Naive thymus-derived CD4-positive, alpha-beta T cell (primary cell): ENCODE measurements at regions of chr19 and their contacts with region 1.

Region 1: GRCh38 chr19:42301656-42302203 is at the start of gene PRR19:
- DNase-seq: peak in 1 of 9 donors; percentile 21
- ATAC-seq: peak; percentile 8
- H3K4me3 ChIP-seq: peak within 1 kb of the TSS; percentile 85
- H3K4me3 Mint-ChIP-seq: peak within 1 kb of the TSS; percentile 83 to 92 (median 89)
- H3K27ac ChIP-seq: peak within 1 kb of the TSS; percentile 71
- H3K27ac Mint-ChIP-seq: peak within 1 kb of the TSS; percentile 64 to 94 (median 88)
- H3K4me1 ChIP-seq: peaks cover 11 to 16% of the 10 kb centered on the region in 2 donors
- H3K4me1 Mint-ChIP-seq: peaks cover 11 to 30% (median 23%) of the 10 kb centered on the region in 7 donors
- H3K27me3 ChIP-seq: no peaks in the 10 kb centered on the region
- H3K27me3 Mint-ChIP-seq: no peaks in the 10 kb centered on the region
- total RNA-seq, gene PRR19: 0.32 to 0.68 (median 0.38) TPM in 4 of 5 experiments, not detected in the other

Region 2: GRCh38 chr19:42176990-42177685 is 124.6 kb before region 1 on chr19:
- CTCF ChIA-PET with region 1: no interaction called
- POLR2A ChIA-PET with region 1: interaction called, 7 read pairs
- intact Hi-C with region 1: loop called in 1 of 2 experiments (anchors 2 kb)
- DNase-seq: peak; percentile 52 to 82 (median 67)
- ATAC-seq: peak; percentile 96
- H3K4me3 ChIP-seq: peak overlapping the region; percentile 41
- H3K4me3 Mint-ChIP-seq: peak overlapping the region in 1 of 10 donors; percentile 12
- H3K27ac ChIP-seq: no peak overlapping the region
- H3K27ac Mint-ChIP-seq: no peak overlapping the region
- H3K4me1 ChIP-seq: peaks cover 12 to 21% of the 10 kb centered on the region in 2 donors
- H3K4me1 Mint-ChIP-seq: peaks cover 16 to 24% (median 19%) of the 10 kb centered on the region in 7 donors
- H3K27me3 ChIP-seq: peaks cover 0 to 11% of the 10 kb centered on the region in 2 donors
- H3K27me3 Mint-ChIP-seq: peaks cover 13 to 34% (median 19%) of the 10 kb centered on the region in 5 donors

Region 3: GRCh38 chr19:42229855-42230351 is 71.8 kb before region 1 on chr19:
- CTCF ChIA-PET with region 1: no interaction called
- POLR2A ChIA-PET with region 1: no interaction called
- intact Hi-C with region 1: no loop called
- DNase-seq: no peak
- ATAC-seq: no peak
- H3K4me3 ChIP-seq: no peak overlapping the region
- H3K4me3 Mint-ChIP-seq: no peak overlapping the region
- H3K27ac ChIP-seq: no peak overlapping the region
- H3K27ac Mint-ChIP-seq: peak overlapping the region in 7 of 9 donors; percentile 9 to 72 (median 50)
- H3K4me1 ChIP-seq: no peaks in the 10 kb centered on the region
- H3K4me1 Mint-ChIP-seq: peaks cover 17 to 38% (median 21%) of the 10 kb centered on the region in 7 donors
- H3K27me3 ChIP-seq: no peaks in the 10 kb centered on the region
- H3K27me3 Mint-ChIP-seq: no peaks in the 10 kb centered on the region

Region 4: DNA sequence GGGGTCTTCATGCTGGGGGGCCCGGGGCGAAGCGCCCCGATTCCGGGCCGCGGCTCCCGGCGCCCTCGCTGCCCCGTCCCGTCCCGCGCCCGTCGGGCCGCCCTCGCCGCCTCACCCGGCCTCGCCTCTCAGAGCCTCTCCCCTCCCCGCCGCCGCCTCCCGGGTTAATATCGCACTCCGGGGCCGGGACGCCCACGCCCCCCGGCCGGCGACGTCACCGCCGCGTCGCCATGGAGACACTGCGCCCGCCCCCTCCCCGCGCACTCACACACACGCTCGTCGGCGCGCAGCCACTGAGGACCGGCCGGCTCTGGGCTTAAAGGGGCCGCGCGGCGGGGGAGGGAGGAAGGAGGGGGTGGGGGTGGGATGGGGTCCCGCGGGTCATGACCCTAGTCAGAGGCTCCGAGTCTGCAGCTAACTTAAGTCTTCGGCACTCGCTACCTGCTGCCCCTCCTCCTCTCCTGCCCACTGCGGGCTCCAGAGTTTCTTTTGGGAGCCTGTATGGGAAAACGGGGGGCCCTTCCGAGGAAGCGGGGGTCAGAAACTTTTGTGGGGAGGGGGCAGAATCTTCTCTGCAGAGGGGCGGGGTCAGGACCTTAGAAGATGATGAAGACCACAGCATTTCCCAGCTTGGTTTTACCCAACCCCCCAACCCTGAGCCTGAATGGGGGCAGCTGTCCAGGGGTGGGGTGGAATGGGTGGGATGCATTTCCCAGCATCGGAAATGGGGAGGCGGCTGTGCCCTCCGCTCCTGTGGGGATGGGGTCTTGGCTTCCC is 46.6 kb before region 1 on chr19 and contains the start of gene ERF:
- CTCF ChIA-PET with region 1: no interaction called
- POLR2A ChIA-PET with region 1: no interaction called
- intact Hi-C with region 1: loop called (anchors 1 to 2 kb)
- DNase-seq: peak; percentile 90 to 98 (median 94)
- ATAC-seq: peak; percentile 90
- H3K4me3 ChIP-seq: peak within 1 kb of the TSS; percentile 96
- H3K4me3 Mint-ChIP-seq: peak within 1 kb of the TSS; percentile 42 to 99 (median 77)
- H3K27ac ChIP-seq: peak within 1 kb of the TSS; percentile 99
- H3K27ac Mint-ChIP-seq: peak within 1 kb of the TSS in 8 of 9 donors; percentile 43 to 92 (median 82)
- H3K4me1 ChIP-seq: peaks cover 20 to 29% of the 10 kb centered on the region in 2 donors
- H3K4me1 Mint-ChIP-seq: peaks cover 20 to 37% (median 30%) of the 10 kb centered on the region in 7 donors
- H3K27me3 ChIP-seq: no peaks in the 10 kb centered on the region
- H3K27me3 Mint-ChIP-seq: peaks cover 0 to 10% (median 0%) of the 10 kb centered on the region in 5 donors
- total RNA-seq, gene ERF: 42.5 to 105 (median 51.8) TPM

Region 5: DNA sequence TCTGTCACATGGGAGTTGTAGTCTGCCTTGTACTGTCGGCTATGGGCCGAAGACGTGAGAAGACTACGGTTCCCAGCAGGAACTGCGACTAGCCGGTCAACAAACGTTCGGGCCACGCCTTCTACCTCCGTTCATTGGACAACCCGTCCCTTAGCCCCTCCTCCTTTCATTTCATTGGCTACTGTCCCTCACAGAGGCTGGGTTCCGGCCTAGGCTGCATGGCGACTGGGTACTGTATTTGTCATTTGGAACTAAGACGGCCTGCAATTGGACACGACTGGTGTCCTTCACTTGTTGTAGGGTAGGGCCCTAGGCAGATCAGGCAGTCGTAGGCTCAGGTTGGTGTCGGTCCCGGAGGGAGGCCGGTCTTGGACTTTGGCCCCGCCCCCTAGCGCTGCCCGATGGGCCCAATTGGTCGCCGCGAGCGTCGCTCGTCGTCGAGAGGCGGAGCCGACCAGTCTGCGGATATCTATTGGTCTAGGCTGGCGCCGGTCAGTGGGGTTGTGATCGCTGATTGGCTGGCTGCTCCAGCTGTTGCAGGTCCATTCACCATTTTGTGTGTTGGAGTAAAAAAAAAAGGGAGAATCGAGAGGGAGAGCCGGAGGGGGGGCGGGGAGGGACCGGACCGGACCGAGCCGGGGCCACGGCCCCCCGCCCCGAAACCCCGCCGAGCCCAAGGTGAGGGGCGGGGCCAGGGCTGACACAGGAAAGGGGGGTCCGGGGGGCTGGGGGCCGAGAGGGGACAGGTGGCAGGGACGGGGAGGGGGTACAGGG is 32.8 kb before region 1 on chr19 and contains the start of gene CIC:
- CTCF ChIA-PET with region 1: no interaction called
- POLR2A ChIA-PET with region 1: no interaction called
- intact Hi-C with region 1: loop called (anchors 1 kb)
- DNase-seq: peak; percentile 95 to 100 (median 99)
- ATAC-seq: peak; percentile 82
- H3K4me3 ChIP-seq: peak within 1 kb of the TSS; percentile 85
- H3K4me3 Mint-ChIP-seq: peak within 1 kb of the TSS in 1 of 10 donors; percentile 94
- H3K27ac ChIP-seq: peak within 1 kb of the TSS; percentile 96
- H3K27ac Mint-ChIP-seq: peak within 1 kb of the TSS in 4 of 9 donors; percentile 98 to 99 (median 99)
- H3K4me1 ChIP-seq: peaks cover 23 to 29% of the 10 kb centered on the region in 2 donors
- H3K4me1 Mint-ChIP-seq: peaks cover 8 to 31% (median 25%) of the 10 kb centered on the region in 7 donors
- H3K27me3 ChIP-seq: no peaks in the 10 kb centered on the region
- H3K27me3 Mint-ChIP-seq: no peaks in the 10 kb centered on the region
- total RNA-seq, gene CIC: 90.4 to 134 (median 102) TPM

Region 6: GRCh38 chr19:42568006-42568405 is 266.3 kb after region 1 on chr19:
- CTCF ChIA-PET with region 1: no interaction called
- POLR2A ChIA-PET with region 1: no interaction called
- intact Hi-C with region 1: no loop called
- DNase-seq: no peak
- ATAC-seq: peak; percentile 31
- H3K4me3 ChIP-seq: no peak overlapping the region
- H3K4me3 Mint-ChIP-seq: no peak overlapping the region
- H3K27ac ChIP-seq: no peak overlapping the region
- H3K27ac Mint-ChIP-seq: peak overlapping the region in 1 of 9 donors; percentile 80
- H3K4me1 ChIP-seq: no peaks in the 10 kb centered on the region
- H3K4me1 Mint-ChIP-seq: peaks cover 0 to 9% (median 4%) of the 10 kb centered on the region in 7 donors
- H3K27me3 ChIP-seq: no peaks in the 10 kb centered on the region
- H3K27me3 Mint-ChIP-seq: peaks cover 5 to 29% (median 13%) of the 10 kb centered on the region in 5 donors